IMR-90 (cell line): ENCODE measurements at regions of chr4 and their contacts with region 1.

Region 1: GRCh38 chr4:47451657-47452056 is 11.8 kb downstream of the COMMD8 start:
- DNase-seq: peak; percentile 61
- ATAC-seq: peak; percentile 84
- H3K4me3 ChIP-seq: no peak overlapping the region
- H3K27ac ChIP-seq: no peak overlapping the region
- H3K4me1 ChIP-seq: peaks cover 2% of the 10 kb centered on the region; the same call in 1 of the 2 replicates
- H3K27me3 ChIP-seq: no peaks in the 10 kb centered on the region
- CTCF ChIP-seq: no peak
- POLR2A ChIP-seq: no peak
- RAD21 ChIP-seq: no peak

Region 2: GRCh38 chr4:47391256-47391655 is 60.4 kb before region 1 on chr4:
- CTCF ChIA-PET with region 1: no interaction called
- POLR2A ChIA-PET with region 1: no interaction called
- dilution Hi-C with region 1: no loop called
- in situ Hi-C with region 1: no loop called
- intact Hi-C with region 1: loop called (anchors 10 kb)
- DNase-seq: no peak
- ATAC-seq: no peak
- H3K4me3 ChIP-seq: no peak overlapping the region
- H3K27ac ChIP-seq: no peak overlapping the region
- H3K4me1 ChIP-seq: no peaks in the 10 kb centered on the region
- H3K27me3 ChIP-seq: no peaks in the 10 kb centered on the region
- CTCF ChIP-seq: no peak
- POLR2A ChIP-seq: no peak
- RAD21 ChIP-seq: no peak